ENCODE measurements at regions of chr7 and their contacts with region 1.

Region 1: GRCh38 chr7:156827587-156828203 is 65.3 kb downstream of the LMBR1 start:
- DNase-seq: no peak
- ATAC-seq: no peak
- H3K4me3 Mint-ChIP-seq: no peak overlapping the region
- H3K27ac Mint-ChIP-seq: no peak overlapping the region
- H3K4me1 Mint-ChIP-seq: no peaks in the 10 kb centered on the region
- H3K27me3 Mint-ChIP-seq: no peaks in the 10 kb centered on the region
- CTCF ChIP-seq: peak; percentile 77

Region 2: DNA sequence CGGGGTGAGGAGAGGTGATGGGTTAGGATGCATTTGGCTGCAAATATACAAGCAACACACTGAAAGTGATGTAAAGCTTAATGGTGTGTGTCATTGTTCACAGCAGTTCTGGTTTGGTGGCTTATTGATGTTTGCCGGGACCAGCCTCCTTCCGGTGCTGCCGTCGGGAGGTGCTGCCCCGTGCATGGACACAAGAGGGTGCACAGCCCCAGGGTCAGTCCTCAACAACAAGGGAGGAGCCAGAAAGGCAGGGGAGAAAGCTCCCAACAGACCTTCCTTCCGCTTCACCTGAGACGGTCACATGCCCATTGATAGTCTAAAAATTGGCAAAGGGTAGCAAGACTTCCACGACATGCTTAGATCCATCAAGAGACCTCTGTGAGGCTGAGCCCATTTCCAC is 177.7 kb before region 1 on chr7:
- CTCF ChIA-PET with region 1: no interaction called
- POLR2A ChIA-PET with region 1: no interaction called
- intact Hi-C with region 1: loop called (anchors 10 kb)
- DNase-seq: peak; percentile 45
- ATAC-seq: peak; percentile 58
- H3K4me3 Mint-ChIP-seq: no peak overlapping the region
- H3K27ac Mint-ChIP-seq: no peak overlapping the region
- H3K4me1 Mint-ChIP-seq: no peaks in the 10 kb centered on the region
- H3K27me3 Mint-ChIP-seq: peaks cover 50% of the 10 kb centered on the region
- CTCF ChIP-seq: peak; percentile 35

Region 3: GRCh38 chr7:156811706-156812105 is 16.0 kb before region 1 on chr7:
- CTCF ChIA-PET with region 1: no interaction called
- POLR2A ChIA-PET with region 1: no interaction called
- intact Hi-C with region 1: no loop called
- DNase-seq: no peak
- ATAC-seq: no peak
- H3K4me3 Mint-ChIP-seq: no peak overlapping the region
- H3K27ac Mint-ChIP-seq: no peak overlapping the region
- H3K4me1 Mint-ChIP-seq: no peaks in the 10 kb centered on the region
- H3K27me3 Mint-ChIP-seq: no peaks in the 10 kb centered on the region
- CTCF ChIP-seq: no peak